IMR-90 (cell line): ENCODE measurements at regions of chr1 and their contacts with region 1.

Region 1: GRCh38 chr1:45686317-45687013 is at the start of gene GPBP1L1:
- DNase-seq: peak; percentile 97
- ATAC-seq: peak; percentile 88
- H3K4me3 ChIP-seq: peak within 1 kb of the TSS; percentile 94
- H3K27ac ChIP-seq: peak within 1 kb of the TSS; percentile 86
- H3K4me1 ChIP-seq: no peaks in the 10 kb centered on the region
- H3K27me3 ChIP-seq: no peaks in the 10 kb centered on the region
- CTCF ChIP-seq: no peak
- POLR2A ChIP-seq: peak; percentile 74; the same call in 1 of the 2 replicates
- RAD21 ChIP-seq: no peak
- total RNA-seq, gene GPBP1L1: 57.4 and 83.6 TPM in 2 replicates

Region 2: GRCh38 chr1:45512641-45513054 is 173.8 kb before region 1 on chr1:
- CTCF ChIA-PET with region 1: no interaction called
- POLR2A ChIA-PET with region 1: no interaction called
- dilution Hi-C with region 1: no loop called
- in situ Hi-C with region 1: no loop called
- intact Hi-C with region 1: loop called (anchors 5 kb)
- DNase-seq: peak; percentile 71
- ATAC-seq: peak; percentile 58
- H3K4me3 ChIP-seq: no peak overlapping the region
- H3K27ac ChIP-seq: no peak overlapping the region
- H3K4me1 ChIP-seq: peaks cover 17% of the 10 kb centered on the region
- H3K27me3 ChIP-seq: no peaks in the 10 kb centered on the region
- CTCF ChIP-seq: peak; percentile 64
- POLR2A ChIP-seq: no peak
- RAD21 ChIP-seq: peak; percentile 64

Region 3: GRCh38 chr1:45521398-45522323 is 164.8 kb before region 1 on chr1 and contains the start of gene PRDX1:
- CTCF ChIA-PET with region 1: no interaction called
- POLR2A ChIA-PET with region 1: interaction called, 10 read pairs
- dilution Hi-C with region 1: no loop called
- in situ Hi-C with region 1: no loop called
- intact Hi-C with region 1: no loop called
- DNase-seq: peak; percentile 94
- ATAC-seq: peak; percentile 91
- H3K4me3 ChIP-seq: peak within 1 kb of the TSS; percentile 60
- H3K27ac ChIP-seq: peak within 1 kb of the TSS; percentile 98
- H3K4me1 ChIP-seq: peaks cover 7% of the 10 kb centered on the region
- H3K27me3 ChIP-seq: no peaks in the 10 kb centered on the region
- CTCF ChIP-seq: 0 out of 2 replicates have a peak, but pooled peaks have one; percentile 14
- POLR2A ChIP-seq: peak; percentile 100
- RAD21 ChIP-seq: no peak
- total RNA-seq, gene PRDX1: 875 and 883 TPM in 2 replicates

Region 4: DNA sequence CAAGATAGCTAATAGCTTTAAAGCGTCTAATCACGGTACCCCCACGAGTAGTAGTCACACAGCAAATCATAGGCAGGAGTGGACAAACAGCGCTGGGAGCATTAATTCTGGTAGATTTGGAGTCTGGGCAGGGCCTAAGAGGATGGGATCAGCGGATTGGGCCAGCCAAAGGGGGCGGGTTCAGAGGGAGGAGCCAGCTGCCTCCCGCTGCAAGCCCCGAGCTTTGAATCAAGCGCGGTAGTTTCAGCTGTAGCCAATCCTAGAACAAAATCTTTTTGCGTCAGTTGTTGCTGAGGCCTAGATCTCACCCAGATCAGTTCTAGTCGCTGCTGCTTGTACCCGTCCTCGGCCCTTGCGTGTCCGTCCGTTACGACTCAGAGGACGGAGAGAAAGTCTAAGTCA is 103.2 kb before region 1 on chr1:
- CTCF ChIA-PET with region 1: no interaction called
- POLR2A ChIA-PET with region 1: no interaction called
- dilution Hi-C with region 1: no loop called
- in situ Hi-C with region 1: no loop called
- intact Hi-C with region 1: loop called (anchors 5 kb)
- DNase-seq: peak; percentile 96
- ATAC-seq: peak; percentile 88
- H3K4me3 ChIP-seq: peak overlapping the region; percentile 61
- H3K27ac ChIP-seq: peak overlapping the region; percentile 80
- H3K4me1 ChIP-seq: no peaks in the 10 kb centered on the region; the same call in none of the 2 replicates
- H3K27me3 ChIP-seq: no peaks in the 10 kb centered on the region
- CTCF ChIP-seq: no peak
- POLR2A ChIP-seq: no peak
- RAD21 ChIP-seq: no peak

Region 5: DNA sequence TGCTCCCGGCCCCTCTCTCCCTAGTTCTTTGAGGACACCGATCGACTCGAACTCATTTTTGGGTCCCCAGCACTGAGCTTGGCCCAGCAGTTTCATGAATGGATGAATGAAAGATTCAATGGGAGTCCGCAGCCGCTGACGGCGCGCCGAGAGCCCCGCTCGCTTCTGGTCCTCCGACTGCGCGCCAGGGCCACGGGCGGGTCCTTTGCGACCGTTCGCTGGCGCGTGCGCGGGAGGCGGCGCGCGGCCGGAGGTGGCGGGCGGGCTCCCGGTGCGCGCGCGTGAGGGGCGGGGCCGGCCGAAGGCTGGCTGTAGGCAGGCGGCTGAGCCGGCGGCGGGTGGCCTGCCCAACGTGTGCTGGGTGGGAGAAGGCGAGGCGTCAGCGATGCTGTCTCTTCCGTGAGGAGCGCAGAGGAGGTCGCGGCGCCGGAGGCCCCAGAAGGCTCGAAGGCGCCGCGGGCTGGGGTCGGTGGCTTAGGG is 116.9 kb after region 1 on chr1 and contains the start of gene MAST2:
- CTCF ChIA-PET with region 1: no interaction called
- POLR2A ChIA-PET with region 1: no interaction called
- dilution Hi-C with region 1: no loop called
- in situ Hi-C with region 1: no loop called
- intact Hi-C with region 1: loop called (anchors 2 kb)
- DNase-seq: peak; percentile 84
- ATAC-seq: peak; percentile 91
- H3K4me3 ChIP-seq: peak within 1 kb of the TSS; percentile 71
- H3K27ac ChIP-seq: peak within 1 kb of the TSS; percentile 87
- H3K4me1 ChIP-seq: peaks cover 5% of the 10 kb centered on the region
- H3K27me3 ChIP-seq: no peaks in the 10 kb centered on the region
- CTCF ChIP-seq: no peak
- POLR2A ChIP-seq: no peak
- RAD21 ChIP-seq: no peak
- total RNA-seq, gene MAST2: 12.5 and 14.2 TPM in 2 replicates

Region 6: DNA sequence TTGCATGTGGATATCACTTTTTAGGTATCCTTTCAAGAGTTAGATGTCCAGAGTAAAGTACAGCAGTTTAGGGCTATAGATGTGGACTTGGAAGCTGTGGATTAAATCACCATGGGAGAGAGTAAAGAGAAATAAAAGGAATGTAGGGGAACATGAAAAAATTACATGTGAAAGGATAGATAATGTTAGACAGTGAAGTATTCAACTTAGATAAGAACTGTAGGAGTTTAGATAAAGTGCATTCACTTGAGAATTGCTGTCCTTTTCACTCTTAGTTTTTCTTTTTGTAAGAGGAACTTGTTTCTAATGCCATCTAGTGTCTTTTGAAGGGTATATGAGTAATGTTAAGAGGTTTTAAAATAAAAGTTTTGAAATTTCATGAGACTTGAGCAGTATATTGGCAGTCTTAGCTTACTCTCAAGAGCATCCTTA is 157.0 kb after region 1 on chr1:
- CTCF ChIA-PET with region 1: no interaction called
- POLR2A ChIA-PET with region 1: no interaction called
- dilution Hi-C with region 1: no loop called
- in situ Hi-C with region 1: no loop called
- intact Hi-C with region 1: loop called (anchors 10 kb)
- DNase-seq: peak; percentile 69
- ATAC-seq: peak; percentile 77
- H3K4me3 ChIP-seq: no peak overlapping the region
- H3K27ac ChIP-seq: no peak overlapping the region
- H3K4me1 ChIP-seq: peaks cover 5% of the 10 kb centered on the region
- H3K27me3 ChIP-seq: no peaks in the 10 kb centered on the region
- CTCF ChIP-seq: peak; percentile 46
- POLR2A ChIP-seq: no peak
- RAD21 ChIP-seq: peak; percentile 44

Region 7: GRCh38 chr1:45884700-45885099 is 198.2 kb after region 1 on chr1:
- CTCF ChIA-PET with region 1: no interaction called
- POLR2A ChIA-PET with region 1: no interaction called
- dilution Hi-C with region 1: no loop called
- in situ Hi-C with region 1: no loop called
- intact Hi-C with region 1: loop called (anchors 2 kb)
- DNase-seq: peak; percentile 37
- ATAC-seq: no peak
- H3K4me3 ChIP-seq: no peak overlapping the region
- H3K27ac ChIP-seq: no peak overlapping the region
- H3K4me1 ChIP-seq: peaks cover 16% of the 10 kb centered on the region
- H3K27me3 ChIP-seq: no peaks in the 10 kb centered on the region
- CTCF ChIP-seq: no peak
- POLR2A ChIP-seq: no peak
- RAD21 ChIP-seq: no peak